ENCODE measurements at regions of chr12 and their contacts with region 1.

Region 1: DNA sequence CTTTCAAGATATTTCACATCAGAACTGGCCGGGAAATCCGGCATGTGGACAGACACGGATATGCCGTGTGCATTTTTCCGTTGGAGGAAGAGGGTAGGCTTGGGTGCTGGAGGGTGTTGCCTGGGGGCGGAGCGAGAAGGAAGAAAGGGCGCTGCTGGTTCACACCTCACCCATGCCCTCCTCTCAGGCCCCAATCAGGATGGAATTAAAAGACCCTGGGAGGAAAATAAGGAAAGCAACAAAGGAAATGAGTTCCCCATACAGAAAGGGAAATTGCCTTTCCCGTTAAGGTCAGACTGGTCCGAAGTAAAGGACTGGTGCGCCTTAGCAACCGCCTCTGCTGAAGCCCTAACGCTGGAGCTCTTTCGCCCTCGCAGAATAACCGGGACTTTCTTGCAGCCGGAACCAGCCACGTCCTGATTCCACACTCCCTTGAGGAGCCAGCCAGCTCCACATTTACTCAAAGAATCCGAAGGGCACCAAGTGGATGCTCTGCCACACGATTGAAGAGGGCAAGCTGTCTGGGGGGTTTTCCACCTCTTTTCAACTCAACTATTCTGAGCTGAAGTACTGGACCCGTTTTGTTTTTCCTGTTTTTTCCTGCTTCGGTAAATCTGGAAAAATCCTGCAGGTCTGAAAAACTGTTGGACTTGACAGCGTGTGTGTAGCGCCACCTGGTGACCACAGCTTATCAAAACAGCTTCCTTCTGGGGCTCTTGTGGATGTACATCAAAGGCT is 37.7 kb upstream of the BCL2L14 start:
- DNase-seq: peak; percentile 71 to 90
- ATAC-seq: peak; percentile 80 to 87
- H3K4me3 ChIP-seq: 0 out of 3 replicates have a peak overlapping the region, but pooled peaks have one; percentile 4
- H3K27ac ChIP-seq: peak overlapping the region; percentile 5 to 68; a peak in 3 of 6 replicates
- H3K4me1 ChIP-seq: 0 out of 3 replicates have a peak, but pooled peaks cover 3% of the 10 kb centered on the region
- CTCF ChIP-seq: peak; percentile 96
- EP300 ChIP-seq: no peak
- POLR2A ChIP-seq: no peak
- RAD21 ChIP-seq: peak; percentile 98 to 99

Region 2: DNA sequence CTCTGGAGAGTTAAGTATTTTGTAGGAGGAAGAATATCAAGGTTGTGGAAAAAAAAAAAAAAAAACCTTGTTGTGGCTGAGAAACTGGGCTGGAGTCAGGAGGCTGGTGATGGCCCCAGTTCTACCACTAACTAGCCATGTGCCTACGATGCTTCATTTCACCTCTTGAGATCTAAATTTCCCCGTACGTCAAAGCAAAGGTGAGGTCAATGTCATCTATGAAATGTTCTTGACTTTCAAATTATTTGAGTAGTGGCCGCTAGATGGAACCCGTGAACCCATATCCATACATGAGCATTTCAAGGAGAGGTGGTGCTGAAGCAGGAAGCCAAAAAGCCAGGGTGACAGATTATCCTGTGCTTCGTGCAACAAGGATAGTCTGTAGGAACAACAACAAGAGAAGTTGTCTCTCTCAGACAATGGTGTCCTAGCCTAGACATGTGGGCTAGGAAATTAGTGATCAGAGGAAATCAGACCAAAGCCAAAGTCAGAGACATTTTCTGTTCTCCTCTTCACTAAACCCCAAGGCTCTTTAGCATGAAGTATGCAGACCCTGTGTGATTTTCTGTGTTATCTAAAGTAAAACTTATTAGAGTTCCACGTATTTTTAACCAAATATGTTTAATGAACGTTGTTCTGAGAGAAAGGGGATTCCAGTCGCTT is 479.0 kb before region 1 on chr12:
- CTCF ChIA-PET with region 1: interaction called, 29 read pairs
- POLR2A ChIA-PET with region 1: interaction called, 3 read pairs
- DNase-seq: peak; percentile 70 to 83
- ATAC-seq: peak; percentile 58 to 86; a peak in 5 of 6 replicates
- H3K4me3 ChIP-seq: no peak overlapping the region
- H3K27ac ChIP-seq: no peak overlapping the region
- H3K4me1 ChIP-seq: no peaks in the 10 kb centered on the region
- CTCF ChIP-seq: peak; percentile 66
- EP300 ChIP-seq: no peak
- POLR2A ChIP-seq: no peak
- RAD21 ChIP-seq: peak; percentile 68 to 74

Region 3: GRCh38 chr12:11581179-11581755 is 451.8 kb before region 1 on chr12:
- CTCF ChIA-PET with region 1: interaction called, 271 read pairs
- POLR2A ChIA-PET with region 1: interaction called, 3 read pairs
- DNase-seq: peak; percentile 43 to 77
- ATAC-seq: no peak
- H3K4me3 ChIP-seq: no peak overlapping the region
- H3K27ac ChIP-seq: peak overlapping the region in 1 of 2 experiments; percentile 52; a peak in 2 of 6 replicates
- H3K4me1 ChIP-seq: peaks cover 21% of the 10 kb centered on the region
- CTCF ChIP-seq: peak; percentile 90
- EP300 ChIP-seq: no peak
- POLR2A ChIP-seq: no peak
- RAD21 ChIP-seq: peak; percentile 93

Region 4: GRCh38 chr12:11855983-11856374 is 177.0 kb before region 1 on chr12:
- CTCF ChIA-PET with region 1: no interaction called
- POLR2A ChIA-PET with region 1: no interaction called
- DNase-seq: no peak
- ATAC-seq: no peak
- H3K4me3 ChIP-seq: no peak overlapping the region
- H3K27ac ChIP-seq: no peak overlapping the region
- H3K4me1 ChIP-seq: no peaks in the 10 kb centered on the region
- CTCF ChIP-seq: no peak
- EP300 ChIP-seq: no peak
- POLR2A ChIP-seq: no peak
- RAD21 ChIP-seq: no peak

Region 5: GRCh38 chr12:12022306-12022936 is 10.6 kb before region 1 on chr12:
- CTCF ChIA-PET with region 1: interaction called, 16 read pairs
- POLR2A ChIA-PET with region 1: no interaction called
- DNase-seq: no peak
- ATAC-seq: no peak
- H3K4me3 ChIP-seq: no peak overlapping the region
- H3K27ac ChIP-seq: no peak overlapping the region
- H3K4me1 ChIP-seq: no peaks in the 10 kb centered on the region
- CTCF ChIP-seq: no peak
- EP300 ChIP-seq: no peak
- POLR2A ChIP-seq: no peak
- RAD21 ChIP-seq: no peak

Region 6: DNA sequence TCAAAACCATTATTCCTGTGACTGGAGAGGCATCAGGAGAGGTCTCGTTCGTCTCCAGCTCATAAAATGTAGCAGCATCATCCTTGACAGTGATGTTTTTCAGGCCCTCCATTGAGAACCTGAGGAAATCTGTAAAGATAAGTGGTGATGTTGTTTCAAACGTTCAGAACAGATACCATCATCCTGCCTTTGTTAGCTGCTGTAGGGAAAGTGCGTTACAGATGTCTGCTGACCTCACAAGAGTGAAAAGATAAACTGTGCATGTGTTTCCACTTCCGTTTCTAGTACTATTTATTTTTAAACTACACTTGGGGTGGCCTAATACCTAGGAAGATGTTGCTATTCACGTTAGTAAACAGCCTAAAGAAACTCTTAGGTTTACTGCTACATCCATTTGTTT is 66.1 kb after region 1 on chr12:
- CTCF ChIA-PET with region 1: no interaction called
- POLR2A ChIA-PET with region 1: no interaction called
- DNase-seq: no peak
- ATAC-seq: no peak
- H3K4me3 ChIP-seq: no peak overlapping the region
- H3K27ac ChIP-seq: no peak overlapping the region
- H3K4me1 ChIP-seq: no peaks in the 10 kb centered on the region
- CTCF ChIP-seq: no peak
- EP300 ChIP-seq: no peak
- POLR2A ChIP-seq: no peak
- RAD21 ChIP-seq: no peak

Region 7: DNA sequence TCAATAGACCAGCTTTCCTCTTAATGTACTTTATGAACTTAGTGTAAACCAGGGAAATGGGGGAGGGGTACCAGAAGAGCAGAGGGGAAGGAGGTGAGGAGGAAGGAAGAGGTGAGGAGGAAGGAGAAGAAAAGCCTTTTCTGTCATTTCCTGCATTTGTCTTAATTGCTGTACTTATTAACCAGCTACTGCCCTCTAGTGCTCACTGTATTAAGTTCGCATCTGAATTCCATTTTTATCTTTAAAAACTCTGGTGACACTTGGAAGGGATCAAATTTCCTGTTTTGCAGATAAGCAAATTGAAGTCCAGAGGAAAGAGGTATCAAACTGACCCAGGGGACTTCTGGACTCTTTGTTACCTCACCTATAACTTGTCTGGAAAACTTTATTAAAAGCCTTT is 294.8 kb after region 1 on chr12:
- CTCF ChIA-PET with region 1: interaction called, 25 read pairs
- POLR2A ChIA-PET with region 1: no interaction called
- DNase-seq: peak; percentile 55 to 82
- ATAC-seq: peak; percentile 61 to 68; a peak in 4 of 6 replicates
- H3K4me3 ChIP-seq: no peak overlapping the region
- H3K27ac ChIP-seq: peak overlapping the region; percentile 15 to 63; a peak in 4 of 6 replicates
- H3K4me1 ChIP-seq: peaks cover 5% of the 10 kb centered on the region
- CTCF ChIP-seq: peak; percentile 92
- EP300 ChIP-seq: no peak
- POLR2A ChIP-seq: no peak
- RAD21 ChIP-seq: peak; percentile 90 to 96

Measured in A549 (cell line).